ENCODE measurements at regions of chr6 and their contacts with region 1.

Region 1: DNA sequence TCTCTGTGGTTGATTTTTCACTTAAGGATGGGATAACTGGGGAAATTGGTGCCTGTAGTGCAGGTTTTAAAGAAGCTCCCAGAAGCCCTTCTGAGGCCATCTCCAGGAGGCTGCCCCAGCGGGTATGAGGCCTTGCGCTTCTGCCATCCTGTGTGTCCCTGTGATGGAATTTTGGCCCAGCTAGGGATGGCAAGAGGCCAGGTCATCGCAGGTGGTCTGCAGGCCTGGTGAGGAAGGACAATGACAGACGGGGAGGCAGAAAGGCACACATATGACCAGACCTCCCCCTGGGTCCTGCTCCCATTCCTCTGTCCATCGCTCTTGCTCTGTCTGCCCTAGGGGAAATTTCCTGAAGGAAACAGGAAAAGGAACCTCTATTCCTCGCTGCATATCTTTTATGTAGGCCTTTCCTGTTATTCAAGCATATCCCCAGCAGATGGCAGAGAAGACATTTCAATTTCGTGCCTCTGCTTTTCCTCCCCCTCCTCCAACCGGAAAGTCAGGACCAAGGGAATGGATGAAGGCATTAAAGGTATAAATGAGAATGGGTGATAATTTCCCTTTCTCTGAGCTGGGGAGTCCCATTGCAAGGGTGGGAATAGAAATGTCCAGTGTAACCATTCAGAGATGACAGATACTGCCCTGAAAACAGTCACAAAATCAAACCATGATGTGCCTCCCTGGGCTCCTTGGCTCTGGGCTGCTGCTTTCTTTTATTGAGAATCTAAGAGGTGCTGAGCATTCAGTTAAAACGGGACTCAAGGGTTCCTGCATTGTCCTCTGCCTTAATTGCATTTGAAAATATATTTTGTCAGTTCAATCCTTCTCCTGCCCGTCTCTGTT is 17.6 kb upstream of the HLA-F start:
- DNase-seq: peak in 1 of 3 donors; percentile 57
- ATAC-seq: peak; percentile 51 to 57
- H3K4me3 ChIP-seq: no peak overlapping the region
- H3K27ac ChIP-seq: no peak overlapping the region
- H3K4me1 ChIP-seq: no peaks in the 10 kb centered on the region
- H3K27me3 ChIP-seq: no peaks in the 10 kb centered on the region

Region 2: GRCh38 chr6:29641430-29642148 is 64.0 kb before region 1 on chr6:
- intact Hi-C with region 1: loop called in 1 of 4 experiments (anchors 2 kb)
- DNase-seq: peak in 1 of 3 donors; percentile 60
- ATAC-seq: peak in 1 of 2 donors; percentile 72
- H3K4me3 ChIP-seq: no peak overlapping the region
- H3K27ac ChIP-seq: no peak overlapping the region
- H3K4me1 ChIP-seq: no peaks in the 10 kb centered on the region
- H3K27me3 ChIP-seq: no peaks in the 10 kb centered on the region

Region 3: DNA sequence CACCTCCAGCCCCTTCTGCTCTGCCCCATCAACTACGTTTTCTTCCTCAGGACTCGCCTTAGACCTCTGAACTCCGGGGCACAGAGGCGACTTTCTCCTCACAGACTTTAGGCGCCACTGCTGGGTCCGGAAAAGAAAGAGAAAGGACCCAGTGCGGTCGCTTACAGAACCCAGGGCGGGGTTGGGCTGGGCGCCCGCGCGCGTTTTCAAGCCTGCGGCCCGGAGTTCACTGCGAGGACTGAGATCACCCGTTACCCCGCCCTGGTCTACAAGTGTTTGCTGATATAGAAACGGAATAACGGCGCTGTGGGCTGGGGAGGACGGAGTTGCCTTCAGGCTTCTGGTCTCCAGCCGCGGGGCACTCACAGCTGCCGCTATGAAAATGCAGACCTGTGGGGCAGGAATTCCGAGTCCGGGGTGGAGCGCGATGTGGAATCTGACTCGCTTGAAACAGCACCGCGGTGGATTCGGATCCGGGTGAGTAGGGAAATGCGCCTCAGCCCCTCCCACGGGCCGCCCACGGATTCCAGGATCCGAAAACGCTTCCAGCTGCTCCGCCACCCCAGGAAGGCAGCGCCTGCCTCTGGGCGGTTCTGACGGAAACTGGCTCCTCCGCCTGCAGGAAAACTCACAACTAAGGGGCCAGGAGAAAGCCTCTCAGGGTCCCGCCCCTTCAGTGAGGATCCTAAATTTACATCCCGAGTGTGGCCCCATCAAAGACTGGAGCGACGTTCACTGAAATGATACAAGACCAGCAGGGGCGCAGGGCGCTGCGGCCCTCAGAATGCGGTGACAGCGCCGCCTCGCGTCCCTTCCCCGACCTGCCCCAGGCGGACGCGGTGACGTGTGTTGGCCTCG is 47.1 kb after region 1 on chr6:
- intact Hi-C with region 1: loop called in 2 of 4 experiments (anchors 5 kb)
- DNase-seq: peak; percentile 93 to 96 (median 95)
- ATAC-seq: peak; percentile 87 to 88
- H3K4me3 ChIP-seq: peak overlapping the region; percentile 66
- H3K27ac ChIP-seq: peak overlapping the region; percentile 98
- H3K4me1 ChIP-seq: peaks cover 8% of the 10 kb centered on the region
- H3K27me3 ChIP-seq: no peaks in the 10 kb centered on the region

Region 4: DNA sequence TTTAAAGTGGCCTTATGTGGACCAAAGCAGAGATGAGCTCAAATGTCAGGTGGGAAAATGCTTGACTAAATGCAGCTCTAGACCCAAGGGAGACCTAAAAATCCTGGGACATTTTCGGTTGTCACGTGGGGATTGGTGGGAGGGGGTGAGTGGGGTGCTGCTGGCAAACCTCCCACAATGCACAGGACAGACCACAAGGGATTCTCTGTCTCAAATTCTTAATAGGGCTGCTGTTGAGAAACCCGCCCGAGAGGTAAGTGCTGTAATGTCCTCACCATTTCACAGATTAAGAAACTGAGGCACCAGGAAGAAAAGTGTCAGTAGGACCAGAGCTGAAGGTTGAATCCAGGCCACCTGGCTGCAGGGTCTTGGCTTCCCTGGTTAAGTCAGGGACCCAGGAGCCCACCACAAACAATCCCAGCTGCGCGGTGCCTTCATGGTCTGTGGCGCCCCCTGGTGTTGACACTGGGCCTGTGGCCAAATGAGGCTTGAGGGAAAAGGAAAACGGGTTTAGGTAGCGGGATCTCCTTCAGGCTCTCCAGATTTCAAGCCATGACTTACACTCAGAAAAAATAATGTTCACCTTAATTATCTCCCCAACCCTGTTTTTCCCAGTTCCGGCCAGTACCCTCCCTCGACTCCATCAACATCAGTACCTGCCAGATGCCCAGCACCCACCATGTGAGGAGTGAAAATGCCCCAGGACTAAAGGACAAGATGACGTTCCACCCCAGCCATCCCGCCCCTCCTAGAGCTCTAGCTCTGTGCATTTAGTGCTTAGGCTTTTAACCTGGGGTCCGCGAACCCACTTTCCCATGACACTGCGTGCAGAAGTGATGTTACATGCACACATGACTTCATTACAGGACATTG is 129.2 kb after region 1 on chr6:
- intact Hi-C with region 1: loop called (anchors 2 to 5 kb)
- DNase-seq: peak; percentile 35 to 78 (median 76)
- ATAC-seq: peak; percentile 36 to 63
- H3K4me3 ChIP-seq: no peak overlapping the region
- H3K27ac ChIP-seq: no peak overlapping the region
- H3K4me1 ChIP-seq: no peaks in the 10 kb centered on the region
- H3K27me3 ChIP-seq: no peaks in the 10 kb centered on the region